ENCODE measurements at regions of chr2 and their contacts with region 1.

Region 1: DNA sequence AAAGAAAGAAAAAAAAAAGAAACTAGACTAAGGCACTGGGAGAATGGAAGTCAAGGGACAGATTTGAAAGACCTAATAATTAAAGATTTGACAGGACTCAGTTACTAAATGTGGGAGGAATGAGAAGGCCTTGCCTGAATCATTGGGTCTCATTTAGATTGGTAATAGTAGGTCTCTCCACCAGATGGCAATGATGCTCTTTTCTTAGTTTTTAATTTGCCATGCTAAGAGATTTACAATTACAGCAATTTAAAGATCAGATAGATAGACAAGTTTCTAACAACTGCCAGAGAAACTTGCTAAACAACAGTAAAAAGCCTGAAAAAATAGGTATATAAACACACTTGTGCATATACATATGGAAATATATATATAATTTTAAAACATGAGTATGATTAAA is 153.0 kb downstream of the TMEM247 start:
- DNase-seq: no peak
- H3K4me3 ChIP-seq: no peak overlapping the region
- H3K27ac ChIP-seq: no peak overlapping the region
- H3K4me1 ChIP-seq: no peaks in the 10 kb centered on the region
- H3K27me3 ChIP-seq: no peaks in the 10 kb centered on the region
- CTCF ChIP-seq: peak; percentile 45 to 56 (median 51)
- EP300 ChIP-seq: no peak
- POLR2A ChIP-seq: no peak

Region 2: DNA sequence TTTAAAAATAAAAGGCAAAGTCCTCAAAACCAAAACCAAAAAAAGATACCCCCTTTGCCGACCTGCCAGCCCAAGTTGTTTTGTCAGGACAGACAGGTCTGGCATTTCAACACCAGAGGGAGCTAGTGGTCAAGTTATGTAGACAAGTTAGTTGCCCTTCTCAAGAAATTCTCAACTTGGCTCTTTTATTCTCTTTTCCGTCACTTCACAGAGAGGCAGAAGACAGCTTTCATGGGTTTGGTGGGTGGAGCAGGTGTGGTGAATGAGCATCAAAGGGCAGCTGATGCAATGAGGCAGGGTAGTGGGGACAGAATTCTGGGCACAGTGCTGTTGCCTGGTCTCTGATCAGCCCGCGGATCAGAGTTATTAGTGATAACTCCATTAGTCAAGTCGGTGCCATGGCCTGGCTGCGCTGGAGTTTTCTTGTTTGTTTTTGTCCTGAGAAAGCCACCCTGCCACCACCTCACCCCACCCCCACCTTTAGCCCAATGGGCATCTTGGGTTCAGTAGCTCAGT is 638.8 kb before region 1 on chr2:
- in situ Hi-C with region 1: loop called in 1 of 4 experiments (anchors 25 kb)
- intact Hi-C with region 1: no loop called
- DNase-seq: peak; percentile 71
- H3K4me3 ChIP-seq: no peak overlapping the region
- H3K27ac ChIP-seq: peak overlapping the region in 3 of 4 donors; percentile 70 to 78 (median 77)
- H3K4me1 ChIP-seq: peaks cover 17 to 45% (median 27%) of the 10 kb centered on the region in 4 donors
- H3K27me3 ChIP-seq: no peaks in the 10 kb centered on the region
- CTCF ChIP-seq: peak; percentile 76 to 86 (median 83)
- EP300 ChIP-seq: no peak
- POLR2A ChIP-seq: no peak

Region 3: GRCh38 chr2:46029332-46029811 is 603.0 kb before region 1 on chr2:
- in situ Hi-C with region 1: loop called in 1 of 4 experiments (anchors 25 kb)
- intact Hi-C with region 1: no loop called
- DNase-seq: no peak
- H3K4me3 ChIP-seq: no peak overlapping the region
- H3K27ac ChIP-seq: no peak overlapping the region
- H3K4me1 ChIP-seq: peaks cover 0 to 19% (median 0%) of the 10 kb centered on the region in 4 donors
- H3K27me3 ChIP-seq: no peaks in the 10 kb centered on the region
- CTCF ChIP-seq: no peak
- EP300 ChIP-seq: no peak
- POLR2A ChIP-seq: no peak

Region 4: GRCh38 chr2:46569061-46569560 is 63.2 kb before region 1 on chr2:
- in situ Hi-C with region 1: no loop called
- intact Hi-C with region 1: no loop called
- DNase-seq: no peak
- H3K4me3 ChIP-seq: no peak overlapping the region
- H3K27ac ChIP-seq: peak overlapping the region; percentile 64 to 74 (median 72)
- H3K4me1 ChIP-seq: peaks cover 9 to 74% (median 21%) of the 10 kb centered on the region in 4 donors
- H3K27me3 ChIP-seq: no peaks in the 10 kb centered on the region
- CTCF ChIP-seq: no peak
- EP300 ChIP-seq: no peak
- POLR2A ChIP-seq: no peak

Region 5: DNA sequence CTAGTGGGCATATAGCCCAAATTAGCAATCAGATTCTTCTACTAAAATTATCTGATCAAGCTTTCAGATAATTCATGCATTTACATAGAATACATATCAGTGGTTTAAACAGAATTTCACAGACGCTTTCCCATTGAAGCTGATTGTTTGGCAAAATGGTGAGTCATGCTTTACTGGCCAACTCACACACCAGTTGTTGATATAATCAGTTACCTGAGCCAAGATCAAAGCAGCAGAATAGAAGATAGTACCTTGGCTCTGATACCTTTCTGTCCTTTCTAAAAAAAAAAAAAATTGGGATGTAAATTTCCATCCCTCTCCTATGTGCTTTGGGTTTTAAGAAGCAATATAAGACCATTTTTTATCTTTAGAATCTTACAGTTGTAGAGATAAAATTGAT is 105.2 kb after region 1 on chr2:
- in situ Hi-C with region 1: no loop called
- intact Hi-C with region 1: no loop called
- DNase-seq: no peak
- H3K4me3 ChIP-seq: no peak overlapping the region
- H3K27ac ChIP-seq: no peak overlapping the region
- H3K4me1 ChIP-seq: peaks cover 0 to 21% (median 6%) of the 10 kb centered on the region in 4 donors
- H3K27me3 ChIP-seq: no peaks in the 10 kb centered on the region
- CTCF ChIP-seq: no peak
- EP300 ChIP-seq: no peak
- POLR2A ChIP-seq: no peak

Region 6: DNA sequence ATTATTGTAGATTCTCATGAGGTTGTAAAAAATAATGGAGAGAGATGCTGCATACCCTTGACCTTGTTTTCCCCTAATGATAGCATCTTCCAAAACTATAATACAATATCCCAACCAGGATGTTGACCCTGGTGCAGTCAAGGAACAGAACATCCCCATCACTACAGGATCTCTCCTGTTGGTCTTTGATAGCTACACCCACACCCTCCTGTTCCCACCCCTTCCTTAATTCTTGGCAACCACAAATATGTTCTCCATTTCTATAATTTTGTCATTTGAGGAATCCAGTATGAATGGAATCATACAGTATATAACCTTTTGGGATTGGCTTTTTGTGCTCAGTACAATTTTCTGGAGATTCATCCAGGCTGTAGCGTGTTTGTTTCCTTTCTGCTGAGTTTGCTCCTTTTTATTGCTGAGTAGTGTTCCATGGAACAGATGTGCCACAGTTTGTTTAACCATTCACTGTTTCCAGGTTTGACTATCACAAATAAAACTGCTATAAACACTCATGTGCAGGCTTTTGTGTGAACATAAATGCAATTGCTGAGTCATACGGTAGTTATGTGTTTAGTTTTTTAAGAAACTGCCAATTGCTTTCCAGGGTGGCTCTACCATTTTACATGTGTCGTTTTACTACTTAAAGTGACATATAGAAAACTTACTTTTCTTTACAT is 261.1 kb after region 1 on chr2:
- in situ Hi-C with region 1: loop called in 1 of 4 experiments (anchors 10 kb)
- intact Hi-C with region 1: no loop called
- DNase-seq: no peak
- H3K4me3 ChIP-seq: no peak overlapping the region
- H3K27ac ChIP-seq: no peak overlapping the region
- H3K4me1 ChIP-seq: peaks cover 0 to 4% (median 0%) of the 10 kb centered on the region in 4 donors
- H3K27me3 ChIP-seq: no peaks in the 10 kb centered on the region
- CTCF ChIP-seq: no peak
- EP300 ChIP-seq: no peak
- POLR2A ChIP-seq: no peak

Region 7: DNA sequence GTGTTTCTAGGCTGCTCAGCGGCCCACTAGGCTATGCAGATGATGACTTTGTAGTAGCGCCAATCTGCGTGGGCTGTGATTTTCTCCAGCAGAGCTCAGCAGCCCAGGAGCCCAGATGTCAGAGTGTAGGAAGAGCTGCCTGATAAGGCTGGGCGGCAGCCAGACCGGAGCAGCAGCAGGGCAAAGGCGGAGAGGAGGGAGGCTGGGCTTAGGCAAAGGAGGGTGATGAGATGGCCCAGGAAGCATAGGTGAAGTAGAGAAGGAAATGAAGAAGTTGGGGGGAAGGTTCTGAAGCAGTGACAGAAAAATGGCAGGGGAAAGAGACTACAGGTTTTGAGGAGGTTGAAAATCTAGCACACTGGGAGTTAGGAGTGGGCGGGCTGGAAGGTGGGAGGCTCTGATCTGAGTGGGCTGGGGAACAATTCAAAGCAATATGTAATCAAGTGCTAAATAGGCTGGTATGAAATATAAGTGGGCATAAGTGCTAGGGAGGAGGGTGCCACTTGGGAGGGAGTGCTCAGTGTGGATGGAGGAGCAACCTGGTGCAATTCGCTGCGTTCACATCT is 573.3 kb after region 1 on chr2:
- in situ Hi-C with region 1: no loop called
- intact Hi-C with region 1: no loop called
- DNase-seq: no peak
- H3K4me3 ChIP-seq: no peak overlapping the region
- H3K27ac ChIP-seq: no peak overlapping the region
- H3K4me1 ChIP-seq: peaks cover 0 to 22% (median 1%) of the 10 kb centered on the region in 4 donors
- H3K27me3 ChIP-seq: no peaks in the 10 kb centered on the region
- CTCF ChIP-seq: no peak
- EP300 ChIP-seq: no peak
- POLR2A ChIP-seq: no peak